Esophagus squamous epithelium (tissue), 5 donors: ENCODE measurements at regions of chr2 and their contacts with region 1.

Region 1: DNA sequence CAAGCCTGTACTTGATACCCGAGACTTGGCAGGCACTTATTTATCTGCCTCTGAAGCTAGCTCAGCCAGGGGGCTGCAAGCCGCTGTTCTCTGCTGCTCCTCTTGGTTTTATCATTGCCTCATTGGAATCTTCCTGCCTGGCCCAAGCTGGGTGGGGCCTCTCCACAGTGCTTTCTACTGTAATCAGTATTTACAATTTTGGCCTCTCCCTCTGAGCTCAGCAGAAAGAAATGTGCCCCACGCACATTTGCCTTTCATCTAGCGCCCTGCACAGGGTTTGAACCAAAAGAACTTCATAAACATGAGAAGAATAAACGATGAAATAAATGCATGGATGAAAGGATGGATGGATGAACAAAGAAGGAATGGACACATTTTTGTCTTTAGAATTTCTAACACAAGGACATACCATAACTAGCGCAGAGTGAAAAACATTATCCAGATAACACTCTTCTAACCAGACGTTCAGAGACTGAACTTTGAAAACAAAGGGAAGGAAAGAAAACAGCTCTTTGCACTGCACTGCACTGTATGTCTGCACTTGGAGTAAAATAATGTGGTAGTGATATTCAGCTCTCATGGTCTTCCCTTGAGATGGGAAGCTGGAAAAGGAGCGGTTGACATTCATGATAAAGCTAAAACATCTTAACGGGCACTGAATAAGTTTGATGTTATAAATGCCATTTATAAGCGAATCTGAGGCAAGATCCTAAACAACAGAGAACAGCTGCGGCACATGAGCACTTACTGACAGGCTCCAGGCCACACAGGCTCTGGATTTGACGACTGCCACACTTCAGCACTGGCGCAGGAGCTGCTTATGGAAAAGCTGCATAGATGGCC is 86.8 kb upstream of the SP3 start:
- DNase-seq: no peak
- H3K4me3 ChIP-seq: no peak overlapping the region
- H3K27ac ChIP-seq: peak overlapping the region in 3 of 4 donors; percentile 26 to 65 (median 45)
- H3K4me1 ChIP-seq: peaks cover 0 to 39% (median 11%) of the 10 kb centered on the region in 3 donors
- H3K27me3 ChIP-seq: no peaks in the 10 kb centered on the region
- CTCF ChIP-seq: no peak
- POLR2A ChIP-seq: no peak

Region 2: GRCh38 chr2:173760553-173760952 is 291.4 kb before region 1 on chr2:
- intact Hi-C with region 1: no loop called
- DNase-seq: no peak
- H3K4me3 ChIP-seq: no peak overlapping the region
- H3K27ac ChIP-seq: no peak overlapping the region
- H3K4me1 ChIP-seq: peaks cover 0 to 3% (median 0%) of the 10 kb centered on the region in 3 donors
- H3K27me3 ChIP-seq: peaks cover 0 to 3% (median 0%) of the 10 kb centered on the region in 4 donors
- CTCF ChIP-seq: no peak
- POLR2A ChIP-seq: no peak

Region 3: DNA sequence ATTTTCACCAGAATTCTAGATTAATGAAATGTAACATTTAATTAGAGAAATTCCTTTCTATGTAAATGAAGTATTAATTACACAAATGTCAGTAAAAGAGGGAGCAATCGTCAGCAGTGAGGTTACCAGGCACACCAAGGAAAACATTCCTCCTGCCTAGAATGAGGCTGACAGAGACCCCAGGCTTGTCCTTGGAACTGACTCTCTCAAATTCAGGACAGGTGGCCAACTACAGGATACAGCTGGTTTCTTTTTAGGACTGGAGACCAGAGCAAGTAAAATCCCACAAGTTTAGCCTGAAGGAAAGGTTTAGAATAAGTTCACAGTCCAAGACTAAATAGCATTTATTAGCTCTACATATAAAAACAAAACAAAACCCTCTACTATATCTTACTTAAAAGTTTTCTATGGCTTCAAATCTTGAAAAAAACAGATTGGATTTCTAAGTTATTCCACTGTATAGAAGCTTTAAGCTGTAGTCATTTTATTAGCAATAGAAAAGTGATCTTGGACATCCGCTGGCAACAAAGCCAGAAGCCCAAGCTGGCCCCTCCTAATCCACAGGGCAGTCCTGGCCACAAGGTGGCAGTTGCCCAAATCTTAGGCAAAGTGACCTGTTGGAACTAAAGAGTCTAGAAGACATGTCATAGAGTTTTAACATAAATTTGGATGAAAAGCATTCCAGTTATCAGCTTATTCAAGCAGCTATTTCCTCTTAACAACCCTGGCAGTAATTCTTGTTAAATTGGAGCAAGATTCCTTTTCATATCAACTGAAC is 167.7 kb before region 1 on chr2:
- intact Hi-C with region 1: loop called (anchors 10 kb)
- DNase-seq: no peak
- H3K4me3 ChIP-seq: no peak overlapping the region
- H3K27ac ChIP-seq: no peak overlapping the region
- H3K4me1 ChIP-seq: peaks cover 0 to 17% (median 0%) of the 10 kb centered on the region in 3 donors
- H3K27me3 ChIP-seq: no peaks in the 10 kb centered on the region
- CTCF ChIP-seq: peak; percentile 32 to 50 (median 44)
- POLR2A ChIP-seq: no peak

Region 4: GRCh38 chr2:174108579-174108978 is 56.6 kb after region 1 on chr2:
- intact Hi-C with region 1: no loop called
- DNase-seq: no peak
- H3K4me3 ChIP-seq: no peak overlapping the region
- H3K27ac ChIP-seq: no peak overlapping the region
- H3K4me1 ChIP-seq: no peaks in the 10 kb centered on the region
- H3K27me3 ChIP-seq: no peaks in the 10 kb centered on the region
- CTCF ChIP-seq: no peak
- POLR2A ChIP-seq: no peak